ENCODE measurements at regions of chr9 and their contacts with region 1.

Region 1: GRCh38 chr9:127734747-127735529 is at the start of gene TOR2A:
- DNase-seq: no peak
- H3K4me3 ChIP-seq: peak within 1 kb of the TSS; percentile 75
- CTCF ChIP-seq: peak; percentile 98

Region 2: DNA sequence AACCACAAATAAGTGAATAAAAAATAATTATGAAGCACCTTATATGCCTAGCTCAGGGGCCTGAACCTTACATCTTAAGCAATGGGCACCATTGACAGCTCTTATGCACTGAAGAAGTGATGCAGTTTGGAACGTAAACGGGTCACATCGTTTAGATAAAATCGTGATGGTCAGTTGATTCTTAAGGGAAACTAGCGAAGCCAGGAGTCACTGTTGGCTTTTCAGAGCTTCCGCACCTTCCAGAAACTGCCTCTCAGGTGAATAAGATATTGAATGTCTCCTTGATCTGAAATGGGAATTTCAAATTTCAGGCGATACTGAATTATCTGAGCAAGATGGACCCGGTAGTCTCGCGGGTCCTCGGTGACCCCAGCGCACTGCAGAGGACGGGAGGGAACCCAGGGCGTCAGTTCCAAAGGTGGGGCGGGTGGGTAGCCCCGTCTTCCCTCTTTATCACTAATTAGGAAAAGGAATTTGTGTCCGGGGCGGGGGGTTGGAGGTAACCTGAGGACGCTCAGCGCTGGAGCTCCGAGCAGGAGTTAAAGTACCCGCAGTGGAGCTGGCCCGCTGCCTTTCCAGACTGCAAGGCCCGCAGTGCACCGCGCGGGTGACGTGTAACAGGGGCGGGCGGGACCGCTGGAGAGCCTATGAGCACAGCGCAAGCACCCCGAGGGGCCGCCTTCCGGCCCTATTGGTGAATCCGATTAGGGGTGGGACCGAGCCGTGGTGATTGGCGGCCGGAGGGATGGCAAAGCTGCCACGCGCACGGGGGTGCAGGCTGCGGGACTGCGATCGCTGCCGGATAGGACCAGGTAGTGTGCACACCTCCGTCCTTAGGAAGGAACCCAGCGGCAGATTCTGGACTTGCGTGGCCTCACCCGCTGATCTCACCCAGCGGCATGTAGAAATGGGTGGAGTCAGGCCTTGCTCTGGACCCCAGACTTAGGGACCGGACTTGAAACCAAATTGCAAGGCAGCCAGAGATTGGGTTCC is 490.0 kb before region 1 on chr9:
- CTCF ChIA-PET with region 1: no interaction called
- POLR2A ChIA-PET with region 1: no interaction called
- DNase-seq: peak; percentile 57
- H3K4me3 ChIP-seq: peak overlapping the region; percentile 94
- CTCF ChIP-seq: no peak

Region 3: GRCh38 chr9:127598839-127599548 is 135.9 kb before region 1 on chr9:
- CTCF ChIA-PET with region 1: interaction called, 156 read pairs
- POLR2A ChIA-PET with region 1: no interaction called
- DNase-seq: no peak
- H3K4me3 ChIP-seq: no peak overlapping the region
- CTCF ChIP-seq: no peak

Region 4: GRCh38 chr9:127715394-127716337 is 19.3 kb before region 1 on chr9 and contains the starts of genes PTRH1 and TTC16:
- CTCF ChIA-PET with region 1: interaction called, 48 read pairs
- POLR2A ChIA-PET with region 1: interaction called, 5 read pairs
- DNase-seq: peak; percentile 46
- H3K4me3 ChIP-seq: peak within 1 kb of the TSS; percentile 75
- CTCF ChIP-seq: no peak

Region 5: GRCh38 chr9:127770905-127771569 is 36.1 kb after region 1 on chr9:
- CTCF ChIA-PET with region 1: interaction called, 26 read pairs
- POLR2A ChIA-PET with region 1: no interaction called
- DNase-seq: peak; percentile 50
- H3K4me3 ChIP-seq: peak overlapping the region; percentile 59
- CTCF ChIP-seq: no peak

Region 6: DNA sequence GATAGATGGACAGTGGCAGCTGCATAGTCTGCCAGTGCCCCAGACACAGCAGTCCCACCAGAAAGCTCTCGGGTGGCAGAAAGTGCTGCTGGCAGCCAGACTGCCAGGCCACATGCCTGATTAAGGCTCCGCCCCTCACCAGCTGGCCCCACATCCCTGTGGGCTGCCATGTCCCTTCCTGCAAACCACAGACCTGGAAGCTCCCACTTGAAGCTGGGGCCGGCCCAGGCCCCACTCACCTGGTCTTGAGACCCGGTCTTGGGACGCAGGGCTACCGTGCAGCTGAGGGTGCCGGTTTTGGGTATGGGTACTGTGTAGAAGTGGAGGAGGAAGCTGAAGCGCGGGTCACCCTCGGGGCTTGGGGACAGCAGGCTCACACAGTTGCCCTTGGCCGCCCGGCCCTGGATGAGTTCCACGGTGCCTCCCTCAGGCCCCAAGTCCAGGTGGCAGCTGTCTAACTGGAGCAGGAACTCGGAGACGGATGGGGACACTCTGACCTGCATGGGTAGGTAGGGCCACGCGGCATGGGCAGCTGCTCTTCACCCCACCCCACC is 83.0 kb after region 1 on chr9:
- CTCF ChIA-PET with region 1: no interaction called
- POLR2A ChIA-PET with region 1: no interaction called
- DNase-seq: no peak
- H3K4me3 ChIP-seq: no peak overlapping the region
- CTCF ChIP-seq: no peak

Region 7: DNA sequence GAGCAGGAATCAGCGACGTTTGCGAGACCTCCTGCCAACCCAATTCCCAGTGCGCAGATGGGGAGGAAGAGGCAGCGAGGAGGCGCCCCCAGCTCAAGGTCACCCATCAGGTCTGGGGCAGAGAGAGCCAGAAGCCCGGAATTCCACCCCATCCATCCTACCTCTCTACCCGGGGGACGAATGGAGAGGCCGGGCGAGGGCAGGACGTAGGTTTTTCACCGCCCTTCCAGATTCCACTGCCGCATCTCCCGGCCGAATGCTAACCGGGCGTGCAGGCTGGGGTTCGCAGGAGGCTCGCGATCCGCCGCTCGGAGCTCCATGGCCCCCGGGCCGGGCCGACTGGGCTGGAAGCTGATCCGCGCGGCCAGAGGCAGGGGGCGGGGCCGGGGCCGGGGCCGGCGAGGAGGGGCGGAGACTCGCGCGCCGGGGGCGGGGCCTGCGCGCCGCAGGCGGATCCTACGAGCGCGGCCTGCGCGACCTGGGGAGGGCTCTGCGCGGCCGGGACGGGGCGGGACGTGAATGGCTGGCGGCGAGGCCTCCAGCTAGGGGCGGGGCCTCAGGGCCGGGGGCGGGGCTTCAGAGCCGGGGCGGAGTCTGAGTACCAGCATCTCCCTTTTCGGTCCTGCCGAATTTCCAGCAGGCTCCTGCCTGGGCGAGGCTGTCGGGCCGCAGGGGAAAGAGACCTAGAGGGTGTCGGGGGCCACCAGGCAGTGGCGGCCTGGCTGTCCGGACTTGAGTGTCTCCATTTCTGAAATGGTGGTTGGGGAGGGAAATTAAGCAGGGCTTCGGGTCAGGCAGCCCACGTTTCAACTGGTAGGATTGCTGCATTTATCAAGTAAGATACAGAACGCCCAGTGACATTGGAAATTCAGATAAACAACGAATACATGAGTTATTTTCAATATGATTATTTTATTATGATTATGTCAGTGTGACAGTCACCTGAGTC is 182.0 kb after region 1 on chr9 and contains the start of gene ST6GALNAC4:
- CTCF ChIA-PET with region 1: interaction called, 69 read pairs
- POLR2A ChIA-PET with region 1: no interaction called
- DNase-seq: no peak
- H3K4me3 ChIP-seq: peak within 1 kb of the TSS; percentile 74
- CTCF ChIP-seq: no peak

Region 8: DNA sequence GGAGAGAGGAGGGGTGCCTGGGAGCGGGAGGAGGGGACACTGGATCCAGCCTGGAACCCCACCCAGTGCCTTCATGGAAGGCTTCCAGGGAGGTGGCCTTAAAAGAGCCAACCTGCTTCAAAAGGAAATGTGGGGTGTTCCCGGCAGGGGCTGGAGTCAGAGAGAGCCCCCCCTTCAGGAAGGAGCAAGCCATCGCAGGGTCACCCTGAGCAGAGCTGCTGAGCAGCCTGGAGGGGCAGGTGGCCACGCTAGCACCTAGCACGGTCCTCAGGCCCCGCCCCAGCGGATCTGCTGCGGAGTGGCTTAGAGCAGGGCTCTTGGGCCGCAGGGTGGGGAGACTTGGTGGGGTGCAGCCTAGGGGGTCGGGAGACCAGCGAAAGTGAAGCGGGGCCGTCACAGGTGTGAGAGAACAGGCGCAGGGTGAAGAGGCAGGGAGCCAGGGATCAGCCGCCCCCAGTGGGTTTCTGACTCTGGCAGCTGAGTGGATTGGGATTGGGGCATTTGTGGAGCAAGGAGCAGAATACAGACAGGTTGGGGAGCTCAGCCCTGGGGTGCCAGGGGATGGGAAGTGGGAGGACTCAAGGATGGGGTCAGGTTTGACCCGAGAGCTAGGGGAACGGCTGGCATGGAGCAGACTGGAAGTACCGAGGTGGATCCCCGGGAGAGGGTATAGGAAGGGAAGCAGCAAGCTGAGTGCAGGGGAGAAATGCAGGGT is 415.8 kb after region 1 on chr9:
- CTCF ChIA-PET with region 1: no interaction called
- POLR2A ChIA-PET with region 1: no interaction called
- DNase-seq: no peak
- H3K4me3 ChIP-seq: no peak overlapping the region
- CTCF ChIP-seq: no peak

Measured in AG04449 (cell line).